ENCODE measurements at regions of chr7 and their contacts with region 1.

Region 1: GRCh38 chr7:73683056-73683964 is at the starts of genes BUD23 and DNAJC30:
- DNase-seq: peak; percentile 99
- H3K4me3 Mint-ChIP-seq: peak within 1 kb of the TSS; percentile 99
- H3K27ac Mint-ChIP-seq: peak within 1 kb of the TSS; percentile 86
- H3K4me1 Mint-ChIP-seq: peaks cover 41% of the 10 kb centered on the region
- H3K27me3 Mint-ChIP-seq: no peaks in the 10 kb centered on the region
- total RNA-seq, gene BUD23: 92.0 to 94.0 TPM
- total RNA-seq, gene DNAJC30: 6.1 to 6.3 TPM

Region 2: GRCh38 chr7:73522105-73522872 is 161.0 kb before region 1 on chr7 and contains the start of gene BAZ1B:
- CTCF ChIA-PET with region 1: no interaction called
- POLR2A ChIA-PET with region 1: no interaction called
- intact Hi-C with region 1: loop called (anchors 10 kb)
- DNase-seq: peak; percentile 99
- H3K4me3 Mint-ChIP-seq: peak within 1 kb of the TSS; percentile 90
- H3K27ac Mint-ChIP-seq: peak within 1 kb of the TSS; percentile 96
- H3K4me1 Mint-ChIP-seq: peaks cover 52% of the 10 kb centered on the region
- H3K27me3 Mint-ChIP-seq: no peaks in the 10 kb centered on the region
- total RNA-seq, gene BAZ1B: 82.3 to 83.8 TPM

Region 3: GRCh38 chr7:73578342-73579127 is 104.8 kb before region 1 on chr7 and contains the start of gene TBL2:
- CTCF ChIA-PET with region 1: no interaction called
- POLR2A ChIA-PET with region 1: no interaction called
- intact Hi-C with region 1: loop called (anchors 1 kb)
- DNase-seq: peak; percentile 99
- H3K4me3 Mint-ChIP-seq: peak within 1 kb of the TSS; percentile 90
- H3K27ac Mint-ChIP-seq: peak within 1 kb of the TSS; percentile 95
- H3K4me1 Mint-ChIP-seq: peaks cover 22% of the 10 kb centered on the region
- H3K27me3 Mint-ChIP-seq: no peaks in the 10 kb centered on the region
- total RNA-seq, gene TBL2: 23.0 to 25.3 TPM

Region 4: GRCh38 chr7:73667344-73668102 is 15.8 kb before region 1 on chr7 and contains the start of gene VPS37D:
- CTCF ChIA-PET with region 1: no interaction called
- POLR2A ChIA-PET with region 1: no interaction called
- intact Hi-C with region 1: loop called (anchors 2 kb)
- DNase-seq: peak; percentile 92
- H3K4me3 Mint-ChIP-seq: peak within 1 kb of the TSS; percentile 62
- H3K27ac Mint-ChIP-seq: no peak within 1 kb of the TSS
- H3K4me1 Mint-ChIP-seq: peaks cover 3% of the 10 kb centered on the region
- H3K27me3 Mint-ChIP-seq: peaks cover 36% of the 10 kb centered on the region
- total RNA-seq, gene VPS37D: 0.22 to 0.26 TPM

Region 5: GRCh38 chr7:73707142-73707595 is 23.9 kb after region 1 on chr7:
- CTCF ChIA-PET with region 1: interaction called, 3 read pairs
- POLR2A ChIA-PET with region 1: no interaction called
- intact Hi-C with region 1: loop called (anchors 2 kb)
- DNase-seq: peak; percentile 31
- H3K4me3 Mint-ChIP-seq: no peak overlapping the region
- H3K27ac Mint-ChIP-seq: no peak overlapping the region
- H3K4me1 Mint-ChIP-seq: peaks cover 10% of the 10 kb centered on the region
- H3K27me3 Mint-ChIP-seq: no peaks in the 10 kb centered on the region

Region 6: DNA sequence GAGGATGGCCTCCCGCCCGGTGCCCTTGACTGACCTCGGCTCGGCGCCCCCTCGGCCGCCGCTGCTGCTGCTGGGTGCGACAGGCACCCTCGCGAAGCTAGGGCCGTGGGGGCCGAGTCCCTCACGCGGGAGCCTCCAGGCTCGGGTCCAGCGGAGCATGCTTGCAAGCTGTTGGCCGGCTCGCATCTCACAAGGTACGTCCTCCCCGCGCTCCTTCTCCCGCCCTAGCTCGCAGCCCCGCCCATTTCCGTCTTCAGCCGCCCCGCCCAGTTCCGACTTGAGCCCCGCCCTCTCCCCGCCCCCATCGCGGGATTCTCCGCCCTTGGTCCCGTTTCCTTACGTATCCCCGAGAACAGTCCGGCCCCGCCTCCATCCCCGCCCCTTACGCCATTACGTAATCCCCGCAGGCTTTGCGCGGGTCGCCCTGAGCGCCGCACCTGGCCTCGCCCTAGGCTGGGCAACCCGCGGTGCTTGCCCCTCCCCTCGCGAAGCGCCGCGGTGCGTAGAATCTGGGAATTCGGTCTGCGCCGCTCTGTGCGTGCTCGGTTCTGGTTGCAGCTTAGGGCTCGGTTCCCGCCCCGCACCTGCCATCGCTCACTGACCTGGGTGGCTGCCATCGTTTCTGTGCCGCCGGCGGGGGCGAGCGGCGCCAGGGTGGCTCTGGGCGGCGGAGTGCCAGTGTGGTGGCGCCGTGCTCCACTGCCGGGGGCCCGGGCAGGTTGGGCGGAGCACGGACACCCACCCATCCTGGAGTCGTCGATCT is 55.5 kb after region 1 on chr7 and contains the start of gene ABHD11:
- CTCF ChIA-PET with region 1: interaction called, 3 read pairs
- POLR2A ChIA-PET with region 1: no interaction called
- intact Hi-C with region 1: loop called (anchors 1 kb)
- DNase-seq: peak; percentile 99
- H3K4me3 Mint-ChIP-seq: peak within 1 kb of the TSS; percentile 91
- H3K27ac Mint-ChIP-seq: peak within 1 kb of the TSS; percentile 82
- H3K4me1 Mint-ChIP-seq: peaks cover 13% of the 10 kb centered on the region
- H3K27me3 Mint-ChIP-seq: no peaks in the 10 kb centered on the region
- total RNA-seq, gene ABHD11: 14.7 to 16.8 TPM